Activated naive CD4-positive, alpha-beta T cell treated with anti-CD3 and anti-CD28 coated beads, Interleukin-2, amount 10 ng/mL, durations not matched to agents 7 days and 5 days (primary cell): ENCODE measurements at regions of chr11 and their contacts with region 1.

Region 1: GRCh38 chr11:7657306-7658025 is 15.8 kb downstream of the CYB5R2 start:
- DNase-seq: peak; percentile 55
- H3K4me3 Mint-ChIP-seq: no peak overlapping the region
- H3K27ac Mint-ChIP-seq: no peak overlapping the region
- H3K4me1 Mint-ChIP-seq: no peaks in the 10 kb centered on the region
- H3K27me3 Mint-ChIP-seq: no peaks in the 10 kb centered on the region

Region 2: GRCh38 chr11:7353100-7353499 is 304.4 kb before region 1 on chr11:
- CTCF ChIA-PET with region 1: interaction called, 13 read pairs
- DNase-seq: peak; percentile 43
- H3K4me3 Mint-ChIP-seq: no peak overlapping the region
- H3K27ac Mint-ChIP-seq: no peak overlapping the region
- H3K4me1 Mint-ChIP-seq: no peaks in the 10 kb centered on the region
- H3K27me3 Mint-ChIP-seq: peaks cover 4% of the 10 kb centered on the region

Region 3: GRCh38 chr11:7442588-7443215 is 214.8 kb before region 1 on chr11:
- CTCF ChIA-PET with region 1: interaction called, 12 read pairs
- DNase-seq: peak; percentile 83
- H3K4me3 Mint-ChIP-seq: no peak overlapping the region
- H3K27ac Mint-ChIP-seq: no peak overlapping the region
- H3K4me1 Mint-ChIP-seq: peaks cover 3% of the 10 kb centered on the region
- H3K27me3 Mint-ChIP-seq: peaks cover 8% of the 10 kb centered on the region

Region 4: DNA sequence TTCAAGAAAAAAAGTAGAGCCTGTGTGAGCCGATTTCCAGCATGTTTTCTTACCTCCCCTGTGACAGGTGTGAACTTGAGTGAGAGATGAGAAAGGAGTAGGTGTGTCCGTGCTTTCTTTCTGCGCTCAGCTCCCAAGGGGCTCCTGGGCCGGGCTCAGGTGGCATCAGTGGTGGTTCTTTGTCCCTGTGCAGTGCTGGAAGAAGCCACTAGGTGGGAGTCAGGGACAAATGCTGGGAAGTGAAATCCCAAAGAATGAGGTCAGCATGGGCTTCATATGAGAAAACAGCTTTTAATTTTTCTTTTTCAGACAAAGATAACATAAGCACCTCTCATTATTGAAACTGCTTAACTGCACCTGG is 85.8 kb before region 1 on chr11:
- CTCF ChIA-PET with region 1: interaction called, 15 read pairs
- DNase-seq: no peak
- H3K4me3 Mint-ChIP-seq: no peak overlapping the region
- H3K27ac Mint-ChIP-seq: no peak overlapping the region
- H3K4me1 Mint-ChIP-seq: peaks cover 23% of the 10 kb centered on the region
- H3K27me3 Mint-ChIP-seq: peaks cover 80% of the 10 kb centered on the region